ENCODE measurements at regions of chr1 and their contacts with region 1.

Region 1: DNA sequence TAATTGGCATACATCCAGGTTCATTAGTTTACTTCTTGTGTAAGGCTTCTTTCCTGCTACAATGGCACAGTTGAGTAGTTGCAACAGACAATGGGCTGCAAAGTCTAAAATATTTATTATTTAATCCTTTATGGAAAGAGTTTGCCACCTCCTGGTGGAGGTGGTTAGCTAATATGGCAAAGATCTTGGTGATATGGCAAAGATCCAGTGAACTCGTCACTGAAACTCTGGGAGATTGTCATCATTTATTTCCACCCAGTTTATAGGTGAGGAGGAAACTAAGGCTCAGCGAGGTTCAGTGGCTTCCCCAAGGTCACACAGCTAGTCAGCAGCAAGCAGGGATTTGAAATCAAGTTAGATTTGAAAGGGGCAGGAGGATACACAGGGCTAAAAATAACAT is 16.1 kb upstream of the IFFO2 start:
- DNase-seq: peak; percentile 60
- H3K4me3 ChIP-seq: no peak overlapping the region
- H3K27ac ChIP-seq: peak overlapping the region; percentile 19
- H3K4me1 ChIP-seq: peaks cover 15% of the 10 kb centered on the region
- H3K27me3 ChIP-seq: no peaks in the 10 kb centered on the region
- CTCF ChIP-seq: peak in 1 of 2 donors; percentile 21
- POLR2A ChIP-seq: no peak

Region 2: DNA sequence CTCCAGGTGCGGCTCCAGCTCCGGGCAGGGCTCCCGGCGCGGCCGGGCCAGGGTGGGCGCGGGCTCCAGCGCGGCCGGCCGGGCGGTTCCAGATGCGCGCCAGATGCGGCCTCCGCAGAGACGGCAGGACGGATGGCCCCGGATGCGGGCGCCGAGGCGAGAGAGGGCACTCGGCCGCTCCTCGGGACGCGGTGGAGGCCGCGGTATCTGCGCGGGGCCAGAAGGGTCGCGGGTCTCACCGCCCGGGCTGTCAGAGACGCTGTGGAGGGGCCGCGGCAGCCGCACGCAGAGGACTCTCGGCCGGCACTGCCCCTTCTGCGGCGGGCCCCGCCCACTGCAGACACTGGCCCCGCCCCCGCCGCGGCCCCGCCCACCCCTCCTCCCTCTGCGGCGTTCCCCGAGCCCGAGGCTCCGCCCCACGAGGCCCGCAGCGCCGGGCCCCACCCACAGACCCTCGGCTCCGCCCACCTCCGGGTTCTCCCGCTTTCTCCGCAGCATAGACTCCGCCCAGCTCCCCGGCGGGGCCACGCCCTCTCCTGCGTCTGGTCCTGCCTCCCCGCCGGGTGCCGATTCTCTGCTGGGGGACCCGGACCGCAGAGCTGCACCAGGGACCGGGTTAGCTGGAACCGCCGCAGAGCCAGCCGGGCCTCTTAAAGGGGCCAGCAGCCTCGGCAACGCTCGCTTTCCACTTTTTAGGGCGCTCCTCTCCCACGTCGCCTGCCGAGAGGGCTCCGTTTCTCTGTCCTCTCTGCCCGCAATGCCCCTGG is 16.0 kb before region 1 on chr1 and contains the start of gene IFFO2:
- CTCF ChIA-PET with region 1: interaction called, 32 read pairs
- POLR2A ChIA-PET with region 1: interaction called, 8 read pairs
- dilution Hi-C with region 1: no loop called
- intact Hi-C with region 1: loop called (anchors 1 kb)
- DNase-seq: peak; percentile 93
- H3K4me3 ChIP-seq: peak within 1 kb of the TSS; percentile 84 to 89 (median 86)
- H3K27ac ChIP-seq: peak within 1 kb of the TSS; percentile 82
- H3K4me1 ChIP-seq: peaks cover 25% of the 10 kb centered on the region
- H3K27me3 ChIP-seq: peaks cover 4 to 9% of the 10 kb centered on the region in 2 experiments
- CTCF ChIP-seq: no peak
- POLR2A ChIP-seq: peak; percentile 88
- total RNA-seq, gene IFFO2: 31.1 and 35.1 TPM in 2 replicates

Region 3: DNA sequence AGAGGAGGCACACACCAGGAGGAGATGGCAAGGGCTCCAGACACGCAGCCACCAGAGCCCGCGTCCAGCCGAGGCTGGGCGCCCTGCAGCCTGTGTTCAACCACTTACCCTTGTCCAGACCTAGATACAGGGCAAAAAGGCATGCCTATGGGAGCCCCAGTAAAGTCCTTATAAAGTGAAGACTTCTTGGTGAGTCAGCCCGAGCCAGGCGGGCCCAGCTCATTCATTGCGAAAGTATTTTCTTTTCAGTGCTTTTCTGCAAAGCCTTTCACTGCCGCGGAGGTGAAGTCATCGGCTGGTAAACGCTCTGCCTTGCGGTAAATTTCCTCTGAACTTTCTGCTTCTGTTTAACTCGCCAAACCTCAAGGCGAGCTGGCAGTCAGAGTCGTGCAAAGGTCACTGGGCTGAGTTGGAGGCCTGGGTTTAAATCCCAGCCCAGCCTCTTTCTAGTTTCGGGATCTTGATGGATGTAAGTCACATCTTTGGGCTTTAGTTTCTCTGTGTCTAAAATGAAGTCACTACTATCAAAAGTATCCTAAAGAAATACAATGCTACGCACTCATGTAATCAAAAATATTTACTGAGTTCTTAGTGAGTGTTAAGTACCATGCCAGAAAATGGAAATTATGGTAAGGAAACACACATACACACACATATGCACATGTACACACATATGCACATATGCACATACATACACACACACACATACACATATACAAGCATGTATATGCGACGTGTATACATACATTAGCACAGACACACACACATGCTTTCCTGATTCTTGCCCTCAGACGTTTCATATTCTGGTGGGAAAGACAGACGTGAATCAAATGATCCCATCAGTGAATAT is 38.7 kb after region 1 on chr1:
- CTCF ChIA-PET with region 1: interaction called, 17 read pairs
- POLR2A ChIA-PET with region 1: interaction called, 3 read pairs
- dilution Hi-C with region 1: no loop called
- intact Hi-C with region 1: loop called (anchors 2 kb)
- DNase-seq: peak; percentile 89
- H3K4me3 ChIP-seq: no peak overlapping the region
- H3K27ac ChIP-seq: peak overlapping the region; percentile 84
- H3K4me1 ChIP-seq: peaks cover 31% of the 10 kb centered on the region
- H3K27me3 ChIP-seq: no peaks in the 10 kb centered on the region
- CTCF ChIP-seq: no peak
- POLR2A ChIP-seq: no peak

Region 4: GRCh38 chr1:19067182-19067911 is 94.8 kb after region 1 on chr1:
- CTCF ChIA-PET with region 1: no interaction called
- POLR2A ChIA-PET with region 1: no interaction called
- dilution Hi-C with region 1: no loop called
- intact Hi-C with region 1: loop called (anchors 5 kb)
- DNase-seq: no peak
- H3K4me3 ChIP-seq: no peak overlapping the region
- H3K27ac ChIP-seq: no peak overlapping the region
- H3K4me1 ChIP-seq: no peaks in the 10 kb centered on the region
- H3K27me3 ChIP-seq: no peaks in the 10 kb centered on the region
- CTCF ChIP-seq: no peak
- POLR2A ChIP-seq: no peak

Region 5: GRCh38 chr1:19081218-19081893 is 108.8 kb after region 1 on chr1:
- CTCF ChIA-PET with region 1: interaction called, 6 read pairs
- POLR2A ChIA-PET with region 1: no interaction called
- dilution Hi-C with region 1: no loop called
- intact Hi-C with region 1: loop called (anchors 5 kb)
- DNase-seq: peak; percentile 52
- H3K4me3 ChIP-seq: no peak overlapping the region
- H3K27ac ChIP-seq: peak overlapping the region; percentile 84
- H3K4me1 ChIP-seq: peaks cover 42% of the 10 kb centered on the region
- H3K27me3 ChIP-seq: no peaks in the 10 kb centered on the region
- CTCF ChIP-seq: no peak
- POLR2A ChIP-seq: no peak